ENCODE measurements at regions of chr1 and their contacts with region 1.

Region 1: DNA sequence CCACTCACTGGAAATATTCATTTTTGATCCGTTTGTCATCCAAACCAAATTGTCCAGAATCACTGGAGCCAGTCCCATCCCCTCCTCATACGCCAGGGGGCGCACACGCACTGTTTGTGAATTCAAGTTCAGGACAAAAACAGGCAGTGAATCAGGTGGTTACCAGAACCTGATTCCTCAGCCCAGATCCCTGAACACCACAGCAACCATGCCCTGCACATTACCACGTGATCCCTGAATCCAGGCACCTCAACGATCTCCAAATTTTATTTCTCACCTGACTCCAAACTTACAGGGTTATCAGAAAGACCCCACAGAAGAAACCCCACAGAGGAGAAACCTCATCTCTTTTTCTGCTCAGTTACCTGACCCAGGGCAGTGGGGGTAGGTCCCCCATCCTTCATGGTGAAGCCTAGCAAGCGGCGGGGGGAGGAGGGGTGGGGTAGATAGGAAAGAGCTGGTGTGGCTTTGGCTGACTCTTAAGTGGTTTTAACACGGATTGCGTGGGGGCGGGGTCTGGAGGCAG is 1.4 kb upstream of the PTPRF start:
- DNase-seq: peak; percentile 61 to 69
- ATAC-seq: peak; percentile 87 to 89
- H3K4me3 ChIP-seq: no peak overlapping the region
- H3K27ac ChIP-seq: no peak overlapping the region
- H3K4me1 ChIP-seq: peaks cover 0 to 4% of the 10 kb centered on the region in 2 donors
- H3K27me3 ChIP-seq: no peaks in the 10 kb centered on the region
- CTCF ChIP-seq: peak; percentile 89 to 97 (median 92)
- POLR2A ChIP-seq: no peak

Region 2: DNA sequence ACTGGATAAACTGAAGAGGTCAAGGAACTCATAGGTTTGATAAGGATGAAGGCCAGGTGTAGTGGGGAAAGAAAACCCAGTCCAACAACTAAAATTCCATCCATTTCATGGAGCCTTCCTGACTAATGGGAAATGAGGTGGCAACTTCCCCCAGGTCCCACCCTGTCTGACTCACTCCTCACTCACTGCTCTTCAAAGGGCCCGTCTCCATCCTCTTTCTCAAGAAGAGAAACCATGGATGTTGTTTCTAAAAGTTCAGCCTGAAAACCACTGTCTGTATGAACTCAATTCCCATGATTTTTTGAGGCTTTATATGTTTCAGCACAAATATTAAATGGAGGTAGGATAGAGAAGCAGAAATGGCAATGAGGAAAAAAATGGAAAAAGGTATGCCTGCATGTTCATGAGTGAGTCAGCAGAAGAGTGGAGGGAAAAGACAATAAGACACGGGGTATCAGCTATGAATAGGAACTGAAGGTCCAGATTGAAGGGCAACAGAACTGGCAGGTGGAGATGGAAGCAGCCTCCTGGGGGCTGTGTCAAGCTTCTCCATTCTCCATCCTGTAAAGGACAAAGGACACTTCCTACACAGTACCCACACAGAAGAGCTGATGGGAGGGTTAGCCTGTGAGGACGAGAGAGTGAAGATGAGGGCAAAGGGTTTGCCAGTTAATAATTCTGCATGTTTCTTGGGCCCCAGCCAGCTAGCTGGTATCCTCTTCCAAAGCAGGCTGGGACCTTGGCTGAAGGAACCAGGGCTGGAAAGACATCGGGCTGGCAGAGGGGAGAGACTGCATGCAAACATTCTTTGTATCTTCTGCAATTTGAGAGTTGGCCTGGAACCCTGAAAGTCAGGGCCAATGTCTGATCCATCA is 156.0 kb before region 1 on chr1:
- in situ Hi-C with region 1: no loop called
- intact Hi-C with region 1: no loop called
- DNase-seq: no peak
- ATAC-seq: no peak
- H3K4me3 ChIP-seq: no peak overlapping the region
- H3K27ac ChIP-seq: peak overlapping the region in 2 of 4 donors; percentile 1 to 54
- H3K4me1 ChIP-seq: peaks cover 6 to 11% of the 10 kb centered on the region in 2 donors
- H3K27me3 ChIP-seq: no peaks in the 10 kb centered on the region
- CTCF ChIP-seq: no peak
- POLR2A ChIP-seq: no peak

Region 3: DNA sequence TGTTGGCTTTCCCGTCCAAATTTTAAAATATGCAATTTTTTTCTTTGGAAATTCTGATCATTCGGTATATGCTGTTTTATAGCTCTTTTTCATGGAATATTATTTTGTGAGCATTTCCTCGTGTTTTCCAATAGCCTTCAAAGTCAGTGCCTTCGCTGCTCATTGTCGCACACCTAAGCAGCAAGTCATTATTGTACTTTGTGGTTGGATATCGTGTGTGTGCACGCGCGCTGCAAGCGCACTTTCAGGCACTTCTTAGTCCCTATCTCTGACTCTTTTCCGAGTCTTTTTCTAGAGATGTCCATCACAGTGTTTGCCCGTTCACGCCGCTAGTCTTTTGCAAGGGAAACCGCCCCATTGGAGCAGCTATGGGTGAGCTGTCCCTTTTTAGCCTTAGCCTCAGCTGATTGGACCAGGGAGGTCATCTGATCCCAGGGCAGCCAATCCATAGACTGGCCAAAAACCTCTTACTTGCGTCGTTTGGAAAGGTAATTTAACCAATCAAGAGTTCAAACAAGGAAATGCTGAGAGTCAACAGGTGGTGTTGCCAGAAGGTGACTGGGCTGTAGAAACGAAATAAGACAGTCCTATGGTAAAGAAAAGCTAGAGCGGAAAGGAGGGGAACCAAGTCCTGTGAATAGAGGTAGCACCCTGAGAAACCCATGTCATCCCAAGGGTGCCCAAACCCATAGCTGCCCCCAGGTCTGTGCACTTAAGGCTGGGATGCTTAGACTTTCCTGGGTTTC is 74.8 kb before region 1 on chr1:
- in situ Hi-C with region 1: no loop called
- intact Hi-C with region 1: no loop called
- DNase-seq: peak; percentile 63 to 79
- ATAC-seq: peak; percentile 90 to 93
- H3K4me3 ChIP-seq: peak overlapping the region; percentile 50 to 72 (median 64)
- H3K27ac ChIP-seq: peak overlapping the region; percentile 77 to 89 (median 82)
- H3K4me1 ChIP-seq: peaks cover 4 to 14% of the 10 kb centered on the region in 2 donors
- H3K27me3 ChIP-seq: no peaks in the 10 kb centered on the region
- CTCF ChIP-seq: peak in 2 of 5 experiments; percentile 12 to 29
- POLR2A ChIP-seq: no peak

Region 4: DNA sequence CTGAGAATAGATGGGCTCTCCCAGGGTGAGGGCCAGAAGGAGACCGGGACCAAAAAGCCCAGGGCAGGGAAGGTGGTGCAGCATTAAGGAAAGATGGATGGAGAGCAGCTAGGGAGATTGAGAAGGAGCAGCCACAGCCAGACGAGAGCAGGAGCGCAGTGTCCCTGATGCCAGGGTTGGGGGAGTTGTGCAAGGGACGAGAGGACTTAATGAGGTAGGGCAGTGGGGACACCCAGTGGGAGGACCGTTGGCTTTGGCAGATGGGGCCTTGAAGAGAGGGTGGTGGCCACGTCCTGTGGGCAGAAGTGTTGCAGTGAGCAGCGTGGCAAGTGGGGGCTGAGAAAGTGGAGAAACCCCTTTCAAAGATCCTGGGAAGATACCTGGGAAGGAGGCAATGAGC is 82.7 kb after region 1 on chr1:
- in situ Hi-C with region 1: no loop called
- intact Hi-C with region 1: loop called (anchors 1 kb)
- DNase-seq: no peak
- ATAC-seq: no peak
- H3K4me3 ChIP-seq: no peak overlapping the region
- H3K27ac ChIP-seq: no peak overlapping the region
- H3K4me1 ChIP-seq: no peaks in the 10 kb centered on the region
- H3K27me3 ChIP-seq: no peaks in the 10 kb centered on the region
- CTCF ChIP-seq: no peak
- POLR2A ChIP-seq: no peak

Region 5: DNA sequence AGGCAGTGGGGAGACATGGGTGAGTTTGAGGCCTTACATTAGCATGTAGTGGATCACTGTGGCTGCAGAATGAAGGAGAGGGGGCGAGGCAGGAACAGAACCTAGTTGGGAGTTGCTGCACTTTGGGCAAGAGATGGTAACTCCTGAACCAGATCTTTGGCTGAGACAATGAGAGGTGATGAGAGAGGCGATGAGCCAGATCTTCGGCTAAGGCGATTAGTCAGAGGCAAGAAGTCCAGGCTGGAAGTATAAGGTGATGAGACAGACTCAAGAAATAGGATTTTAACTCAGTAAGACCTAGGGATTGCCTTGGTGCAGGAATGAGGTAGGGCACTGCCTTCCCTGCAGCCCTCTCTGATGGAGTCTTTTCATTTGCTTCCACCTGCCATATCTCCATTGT is 395.2 kb after region 1 on chr1:
- in situ Hi-C with region 1: loop called in 3 of 4 experiments (anchors 10 to 25 kb)
- intact Hi-C with region 1: no loop called
- DNase-seq: no peak
- ATAC-seq: no peak
- H3K4me3 ChIP-seq: no peak overlapping the region
- H3K27ac ChIP-seq: no peak overlapping the region
- H3K4me1 ChIP-seq: no peaks in the 10 kb centered on the region
- H3K27me3 ChIP-seq: no peaks in the 10 kb centered on the region
- CTCF ChIP-seq: no peak
- POLR2A ChIP-seq: no peak

Region 6: DNA sequence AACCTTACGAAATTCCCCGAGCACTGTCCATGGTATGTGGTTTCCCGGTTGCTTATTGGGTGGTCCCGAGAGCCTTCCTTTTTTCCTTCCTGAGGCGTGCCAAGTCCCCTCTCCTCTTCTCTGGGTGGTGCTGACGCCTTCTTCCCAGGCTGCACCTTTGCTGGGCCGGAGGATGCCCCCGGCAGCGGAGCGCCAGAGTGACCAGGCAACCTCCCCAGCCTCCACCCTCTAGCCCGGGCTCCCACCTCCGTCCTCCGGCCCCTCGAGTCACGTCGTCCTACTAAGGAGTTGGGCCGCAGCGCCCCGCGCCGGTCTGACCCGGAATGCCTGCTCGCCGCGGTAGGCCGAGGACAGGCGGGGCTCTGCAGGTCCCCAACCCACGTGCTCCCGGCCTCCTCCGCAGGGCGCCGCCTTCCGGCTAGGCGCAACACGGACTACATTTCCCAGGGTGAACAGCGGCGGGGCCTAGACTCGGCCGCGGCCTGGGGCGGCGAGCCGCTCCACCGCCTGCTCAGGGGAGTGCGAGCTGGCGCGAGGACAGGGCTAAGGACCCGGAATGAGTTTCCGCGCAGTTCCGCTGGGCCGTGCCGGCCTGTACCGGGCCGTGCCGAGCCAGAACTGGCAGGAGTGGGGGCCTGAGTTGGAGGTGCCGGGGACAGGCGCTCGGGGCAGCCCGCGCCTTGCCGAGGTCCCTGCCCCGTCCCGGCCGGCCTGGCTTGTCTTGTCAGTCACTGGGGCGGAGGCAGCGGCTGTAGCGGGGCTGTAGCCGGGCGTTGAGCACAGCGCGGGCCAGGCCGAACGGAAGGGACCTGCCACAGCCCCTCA is 417.2 kb after region 1 on chr1 and contains the start of gene IPO13:
- in situ Hi-C with region 1: loop called in 2 of 4 experiments (anchors 25 kb)
- intact Hi-C with region 1: no loop called
- DNase-seq: peak; percentile 95 to 97
- ATAC-seq: peak; percentile 80
- H3K4me3 ChIP-seq: peak within 1 kb of the TSS; percentile 73 to 85 (median 80)
- H3K27ac ChIP-seq: peak within 1 kb of the TSS; percentile 90 to 97 (median 94)
- H3K4me1 ChIP-seq: peaks cover 52 to 55% of the 10 kb centered on the region in 2 donors
- H3K27me3 ChIP-seq: no peaks in the 10 kb centered on the region
- CTCF ChIP-seq: peak; percentile 67 to 88 (median 85)
- POLR2A ChIP-seq: peak; percentile 90 to 96
- total RNA-seq, gene IPO13: 81.9 to 171 (median 105) TPM

Region 7: GRCh38 chr1:44049839-44050238 is 520.6 kb after region 1 on chr1:
- in situ Hi-C with region 1: loop called (anchors 10 to 25 kb)
- intact Hi-C with region 1: loop called (anchors 1 kb)
- DNase-seq: no peak
- ATAC-seq: no peak
- H3K4me3 ChIP-seq: no peak overlapping the region
- H3K27ac ChIP-seq: no peak overlapping the region
- H3K4me1 ChIP-seq: no peaks in the 10 kb centered on the region
- H3K27me3 ChIP-seq: no peaks in the 10 kb centered on the region
- CTCF ChIP-seq: no peak
- POLR2A ChIP-seq: no peak

Measured in gastrocnemius medialis (tissue), 4 donors.